B cell (primary cell): ENCODE measurements at regions of chr2 and their contacts with region 1.

Region 1: DNA sequence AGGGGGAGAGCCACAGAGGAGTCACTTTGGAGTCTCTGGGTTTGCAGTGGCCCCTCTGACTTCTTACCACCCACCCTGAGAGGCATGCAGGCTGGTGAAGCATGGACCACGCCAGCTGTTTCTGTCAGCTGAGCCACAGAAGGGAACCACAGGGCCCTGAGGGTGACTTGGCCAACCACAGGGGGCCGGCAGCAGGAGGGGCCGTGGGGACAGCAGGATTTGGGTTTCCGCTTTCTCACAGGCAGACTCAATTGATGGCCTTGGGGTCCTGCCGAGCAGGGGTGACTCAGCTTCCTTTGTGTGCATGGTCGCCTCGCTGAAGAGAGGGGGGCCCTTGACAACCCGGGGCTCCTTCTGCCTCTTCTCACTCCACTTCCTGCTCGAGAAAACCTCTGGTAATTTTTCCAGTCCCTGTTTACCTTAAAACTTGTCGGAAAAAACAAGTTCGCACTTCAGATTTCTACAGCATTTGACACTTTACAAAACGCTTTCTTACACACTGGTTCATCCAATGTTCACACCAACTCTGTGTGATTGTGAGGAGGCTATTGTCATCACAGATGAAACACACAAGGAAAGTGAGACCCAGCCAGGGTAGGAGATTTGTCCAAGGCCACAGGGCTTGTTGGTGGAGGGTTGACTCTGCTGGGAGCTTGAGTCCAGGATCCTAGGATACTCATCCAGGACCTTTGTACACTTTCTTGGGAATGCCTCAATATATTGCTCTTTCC is 311.2 kb downstream of the LPIN1 start:
- DNase-seq: peak; percentile 68
- ATAC-seq: peak; percentile 86
- H3K4me3 ChIP-seq: peak overlapping the region in 2 of 5 experiments; percentile 2 to 44
- H3K4me3 Mint-ChIP-seq: peak overlapping the region; percentile 65
- H3K27ac ChIP-seq: peak overlapping the region in 1 of 2 donors; percentile 11
- H3K27ac Mint-ChIP-seq: peak overlapping the region; percentile 78
- H3K4me1 ChIP-seq: peaks cover 51 to 55% of the 10 kb centered on the region in 2 donors
- H3K4me1 Mint-ChIP-seq: peaks cover 63% of the 10 kb centered on the region
- H3K27me3 ChIP-seq: no peaks in the 10 kb centered on the region
- H3K27me3 Mint-ChIP-seq: no peaks in the 10 kb centered on the region
- CTCF ChIP-seq: no peak

Region 2: GRCh38 chr2:12005886-12006681 is 51.5 kb before region 1 on chr2:
- CTCF ChIA-PET with region 1: no interaction called
- POLR2A ChIA-PET with region 1: no interaction called
- intact Hi-C with region 1: loop called (anchors 10 kb)
- DNase-seq: peak; percentile 72
- ATAC-seq: peak; percentile 51
- H3K4me3 ChIP-seq: peak overlapping the region in 1 of 5 experiments; percentile 4
- H3K4me3 Mint-ChIP-seq: peak overlapping the region; percentile 30
- H3K27ac ChIP-seq: no peak overlapping the region
- H3K27ac Mint-ChIP-seq: no peak overlapping the region
- H3K4me1 ChIP-seq: peaks cover 30 to 42% of the 10 kb centered on the region in 2 donors
- H3K4me1 Mint-ChIP-seq: peaks cover 55% of the 10 kb centered on the region
- H3K27me3 ChIP-seq: no peaks in the 10 kb centered on the region
- H3K27me3 Mint-ChIP-seq: no peaks in the 10 kb centered on the region
- CTCF ChIP-seq: no peak

Region 3: GRCh38 chr2:12071318-12071717 is 13.7 kb after region 1 on chr2:
- CTCF ChIA-PET with region 1: interaction called, 3 read pairs
- POLR2A ChIA-PET with region 1: interaction called, 3 read pairs
- intact Hi-C with region 1: loop called (anchors 1 kb)
- DNase-seq: peak; percentile 70
- ATAC-seq: peak; percentile 79
- H3K4me3 ChIP-seq: no peak overlapping the region
- H3K4me3 Mint-ChIP-seq: peak overlapping the region; percentile 35
- H3K27ac ChIP-seq: no peak overlapping the region
- H3K27ac Mint-ChIP-seq: peak overlapping the region; percentile 56
- H3K4me1 ChIP-seq: peaks cover 49 to 51% of the 10 kb centered on the region in 2 donors
- H3K4me1 Mint-ChIP-seq: peaks cover 59% of the 10 kb centered on the region
- H3K27me3 ChIP-seq: no peaks in the 10 kb centered on the region
- H3K27me3 Mint-ChIP-seq: no peaks in the 10 kb centered on the region
- CTCF ChIP-seq: no peak